ENCODE measurements at regions of chr3 and their contacts with region 1.

Region 1: DNA sequence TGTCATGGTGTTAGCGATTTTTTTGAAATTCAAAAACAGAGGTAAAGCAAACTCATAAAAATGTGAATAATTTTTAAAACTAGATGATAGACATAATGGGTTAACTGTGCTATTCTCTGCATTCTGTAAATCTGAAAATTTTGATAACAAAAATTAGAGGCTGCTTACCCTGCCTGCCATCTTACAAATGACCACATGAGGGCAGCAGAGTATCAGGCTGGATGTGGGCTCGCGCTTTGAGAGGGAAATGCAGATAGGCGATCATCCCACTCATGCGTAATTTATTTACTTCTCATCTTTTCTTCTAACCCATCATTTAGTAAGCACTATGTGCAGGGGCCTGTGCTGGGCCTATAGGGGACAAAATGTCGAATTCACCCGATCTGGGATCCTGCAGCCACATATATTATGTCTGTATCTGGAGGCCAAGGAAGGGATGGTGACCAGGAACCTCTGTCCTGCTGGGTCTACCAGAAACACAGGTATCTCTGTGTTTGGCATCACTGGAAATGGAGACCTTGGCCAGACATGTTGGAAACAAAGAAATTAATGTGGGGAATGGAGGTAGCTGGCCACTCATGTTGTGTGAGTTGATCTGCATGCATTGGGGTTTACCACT is 7.8 kb upstream of the RAD18 start:
- DNase-seq: peak; percentile 69
- H3K4me3 Mint-ChIP-seq: no peak overlapping the region
- H3K27ac Mint-ChIP-seq: no peak overlapping the region
- H3K4me1 Mint-ChIP-seq: peaks cover under 1% of the 10 kb centered on the region
- H3K27me3 Mint-ChIP-seq: no peaks in the 10 kb centered on the region
- CTCF ChIP-seq: peak; percentile 81

Region 2: GRCh38 chr3:9067352-9067975 is 96.4 kb after region 1 on chr3:
- CTCF ChIA-PET with region 1: no interaction called
- intact Hi-C with region 1: loop called (anchors 1 kb)
- DNase-seq: peak; percentile 33
- H3K4me3 Mint-ChIP-seq: no peak overlapping the region
- H3K27ac Mint-ChIP-seq: no peak overlapping the region
- H3K4me1 Mint-ChIP-seq: no peaks in the 10 kb centered on the region
- H3K27me3 Mint-ChIP-seq: peaks cover 29% of the 10 kb centered on the region
- CTCF ChIP-seq: peak; percentile 71

Region 3: DNA sequence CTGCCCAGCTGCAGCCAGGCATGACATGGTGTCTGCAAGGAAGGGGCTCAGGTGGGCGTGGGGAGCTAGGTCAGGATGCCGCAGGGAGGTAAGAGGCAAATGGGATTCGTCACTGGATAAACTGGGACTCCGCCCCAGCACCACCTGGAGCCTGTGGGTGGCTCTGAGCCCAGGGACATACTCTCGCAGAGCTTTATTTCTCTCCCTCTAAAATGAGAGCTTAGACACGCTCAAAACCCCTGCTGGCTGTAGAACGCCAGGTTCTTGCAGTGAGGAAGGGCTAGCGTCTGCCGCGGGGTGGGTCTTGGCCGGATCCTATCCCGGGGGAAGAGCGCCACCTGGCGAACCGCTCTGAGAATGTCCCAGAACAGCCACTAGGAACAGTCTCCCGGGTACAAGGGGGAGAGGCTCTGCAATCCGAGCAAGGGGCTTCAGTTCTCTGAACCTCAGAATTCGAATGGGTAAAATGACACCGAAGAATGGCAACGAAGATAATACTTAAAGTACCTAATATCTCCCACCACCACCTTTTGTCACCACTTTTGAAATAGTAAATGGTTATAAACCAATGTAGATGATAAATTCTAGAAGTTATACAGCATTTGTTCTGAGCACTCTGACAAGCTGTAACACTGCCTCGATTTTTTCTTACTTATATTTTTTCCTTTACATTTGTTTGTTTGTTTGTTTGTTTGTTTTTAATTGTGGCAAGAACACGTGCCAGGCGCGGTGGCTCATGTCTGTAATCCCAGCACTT is 331.5 kb after region 1 on chr3:
- CTCF ChIA-PET with region 1: interaction called, 8 read pairs
- intact Hi-C with region 1: loop called (anchors 1 kb)
- DNase-seq: peak; percentile 85
- H3K4me3 Mint-ChIP-seq: no peak overlapping the region
- H3K27ac Mint-ChIP-seq: no peak overlapping the region
- H3K4me1 Mint-ChIP-seq: peaks cover 7% of the 10 kb centered on the region
- H3K27me3 Mint-ChIP-seq: peaks cover 17% of the 10 kb centered on the region
- CTCF ChIP-seq: peak; percentile 86